ENCODE measurements at regions of chr18 and their contacts with region 1.

Region 1: DNA sequence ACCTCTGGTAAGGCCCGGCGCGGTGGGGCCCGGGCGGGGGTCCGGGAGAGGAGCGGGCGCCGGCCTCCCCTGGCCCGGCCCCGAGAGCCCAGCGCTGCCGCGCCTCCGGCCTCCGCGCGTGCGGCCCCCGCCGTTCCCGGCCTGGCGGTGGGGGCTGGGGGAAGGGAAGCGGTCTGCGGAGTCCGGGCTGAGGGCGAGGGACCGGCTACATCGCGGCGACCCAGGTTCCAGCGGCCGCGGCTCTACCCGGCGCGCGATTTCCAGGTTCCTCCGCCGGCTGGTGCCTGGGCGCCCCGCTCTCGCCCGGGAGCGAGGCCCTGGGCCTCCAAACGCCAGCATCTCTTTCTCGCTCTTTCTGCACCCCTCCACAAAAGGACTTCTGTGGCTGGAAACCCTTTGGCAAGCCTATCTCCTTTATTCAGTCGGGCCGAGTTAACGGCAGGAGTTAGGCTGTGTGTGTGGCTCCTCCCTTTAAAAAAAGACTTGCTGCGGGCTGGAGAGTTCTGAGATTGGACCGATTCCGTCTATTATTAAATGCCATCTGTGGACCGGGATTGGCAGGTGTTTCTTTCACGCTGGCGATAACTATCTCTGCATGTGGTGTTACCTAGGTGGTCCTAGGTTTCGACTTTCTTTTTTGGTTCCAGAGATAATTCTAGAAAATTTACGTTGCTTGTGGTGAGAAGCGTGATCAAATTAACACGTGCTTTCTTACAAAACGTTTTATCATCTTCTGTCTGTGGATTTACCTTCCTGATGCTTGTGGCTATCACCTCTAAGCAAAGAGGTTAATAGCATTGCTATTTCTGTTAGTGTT is 592 bp downstream of the ME2 start:
- DNase-seq: peak in 1 of 2 donors; percentile 31
- ATAC-seq: no peak

Region 2: GRCh38 chr18:51039138-51040112 is 159.9 kb after region 1 on chr18:
- intact Hi-C with region 1: loop called in 1 of 2 experiments (anchors 10 kb)
- DNase-seq: no peak
- ATAC-seq: no peak

Measured in left colon (tissue), 2 donors.